ENCODE measurements at regions of chr9 and their contacts with region 1.

Region 1: GRCh38 chr9:6305954-6306563 is 22.1 kb upstream of the TPD52L3 start:
- DNase-seq: no peak

Region 2: DNA sequence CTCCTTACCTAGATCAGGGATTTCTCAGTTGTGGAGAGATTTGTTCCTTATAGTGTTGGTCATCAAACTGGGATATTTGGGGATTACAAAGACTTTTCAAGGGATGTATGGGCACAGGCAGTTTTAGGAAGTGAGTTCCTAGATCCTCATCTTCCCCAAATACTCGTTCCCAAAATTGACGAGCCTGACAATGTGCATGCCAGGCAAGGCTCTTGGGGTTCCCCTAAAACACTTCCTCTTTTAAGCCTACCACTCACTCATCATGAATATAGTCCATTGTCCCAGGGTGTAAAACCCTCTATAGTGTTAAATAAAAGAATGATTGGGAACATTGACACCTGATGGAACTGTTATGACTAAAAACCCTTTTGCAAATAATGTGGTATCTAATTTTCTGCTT is 769.4 kb before region 1 on chr9:
- intact Hi-C with region 1: no loop called
- DNase-seq: no peak

Region 3: GRCh38 chr9:5886114-5886939 is 419.7 kb before region 1 on chr9:
- intact Hi-C with region 1: loop called (anchors 5 kb)
- DNase-seq: no peak

Region 4: GRCh38 chr9:6055213-6055612 is 250.8 kb before region 1 on chr9:
- intact Hi-C with region 1: loop called (anchors 2 kb)
- DNase-seq: no peak

Region 5: GRCh38 chr9:6080154-6080716 is 225.8 kb before region 1 on chr9:
- intact Hi-C with region 1: no loop called
- DNase-seq: peak; percentile 91

Region 6: GRCh38 chr9:6198261-6198660 is 107.8 kb before region 1 on chr9:
- intact Hi-C with region 1: loop called (anchors 1 kb)
- DNase-seq: no peak

Measured in cardiac septum (tissue), 1 donor.